Gastrocnemius medialis (tissue), 4 donors: ENCODE measurements at regions of chr2 and their contacts with region 1.

Region 1: DNA sequence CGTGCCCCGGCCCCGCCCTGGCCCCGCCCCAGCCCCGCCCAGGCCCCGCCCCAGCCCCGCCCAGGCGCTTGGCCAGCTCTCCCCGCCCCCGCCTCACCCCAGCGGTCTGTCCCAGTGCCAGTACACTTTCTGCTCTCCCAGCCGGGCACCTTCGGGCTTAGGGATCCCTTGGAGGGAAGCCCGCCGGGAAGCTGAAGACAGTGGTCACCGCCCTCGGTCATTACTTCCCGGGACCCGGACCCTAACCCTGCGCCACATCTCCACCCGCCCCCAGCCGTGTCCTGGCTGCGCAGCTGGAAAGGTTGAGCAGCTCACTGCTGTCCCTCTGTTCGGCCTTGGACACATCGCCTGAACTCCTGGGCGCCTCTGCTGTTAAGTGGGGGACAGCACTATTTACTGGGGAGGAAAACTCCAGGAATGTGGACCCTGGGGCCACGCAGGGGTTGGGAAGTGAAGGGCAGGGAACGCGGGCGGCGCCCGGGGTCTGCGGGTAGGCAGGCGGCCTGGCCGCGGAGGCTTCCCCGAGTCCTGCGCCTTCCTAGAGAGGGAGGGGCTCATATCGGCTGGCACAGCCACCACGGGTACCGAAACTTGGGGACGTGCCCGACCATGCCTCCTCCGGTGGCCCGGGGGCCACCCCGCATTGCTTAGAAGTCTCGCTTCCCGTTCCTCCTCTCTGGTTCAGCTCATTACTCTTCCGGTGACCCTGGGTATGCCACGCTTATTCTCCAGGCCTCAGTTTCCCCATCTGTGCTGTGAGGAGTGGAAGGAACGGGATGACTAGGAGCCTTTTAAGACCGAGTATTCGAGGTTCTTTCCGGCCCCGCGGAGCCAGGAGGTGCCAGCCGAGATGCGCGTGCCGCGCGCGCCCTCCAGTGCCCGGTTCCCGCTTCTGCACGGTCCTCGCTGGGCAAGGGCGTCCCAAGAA is 121.0 kb downstream of the GYPC start:
- DNase-seq: peak; percentile 59 to 69
- ATAC-seq: peak; percentile 89 to 91
- H3K4me3 ChIP-seq: peak overlapping the region; percentile 67 to 74 (median 70)
- H3K27ac ChIP-seq: peak overlapping the region; percentile 50 to 74 (median 59)
- H3K4me1 ChIP-seq: peaks cover 0 to 5% of the 10 kb centered on the region in 2 donors
- H3K27me3 ChIP-seq: no peaks in the 10 kb centered on the region
- CTCF ChIP-seq: peak; percentile 88 to 99 (median 94)
- POLR2A ChIP-seq: no peak

Region 2: GRCh38 chr2:126244937-126245336 is 532.0 kb before region 1 on chr2:
- in situ Hi-C with region 1: loop called in 1 of 4 experiments (anchors 25 kb)
- intact Hi-C with region 1: loop called (anchors 5 kb)
- DNase-seq: peak in 1 of 2 donors; percentile 16
- ATAC-seq: no peak
- H3K4me3 ChIP-seq: no peak overlapping the region
- H3K27ac ChIP-seq: no peak overlapping the region
- H3K4me1 ChIP-seq: no peaks in the 10 kb centered on the region
- H3K27me3 ChIP-seq: no peaks in the 10 kb centered on the region
- CTCF ChIP-seq: peak in 1 of 5 experiments; percentile 34
- POLR2A ChIP-seq: no peak

Region 3: DNA sequence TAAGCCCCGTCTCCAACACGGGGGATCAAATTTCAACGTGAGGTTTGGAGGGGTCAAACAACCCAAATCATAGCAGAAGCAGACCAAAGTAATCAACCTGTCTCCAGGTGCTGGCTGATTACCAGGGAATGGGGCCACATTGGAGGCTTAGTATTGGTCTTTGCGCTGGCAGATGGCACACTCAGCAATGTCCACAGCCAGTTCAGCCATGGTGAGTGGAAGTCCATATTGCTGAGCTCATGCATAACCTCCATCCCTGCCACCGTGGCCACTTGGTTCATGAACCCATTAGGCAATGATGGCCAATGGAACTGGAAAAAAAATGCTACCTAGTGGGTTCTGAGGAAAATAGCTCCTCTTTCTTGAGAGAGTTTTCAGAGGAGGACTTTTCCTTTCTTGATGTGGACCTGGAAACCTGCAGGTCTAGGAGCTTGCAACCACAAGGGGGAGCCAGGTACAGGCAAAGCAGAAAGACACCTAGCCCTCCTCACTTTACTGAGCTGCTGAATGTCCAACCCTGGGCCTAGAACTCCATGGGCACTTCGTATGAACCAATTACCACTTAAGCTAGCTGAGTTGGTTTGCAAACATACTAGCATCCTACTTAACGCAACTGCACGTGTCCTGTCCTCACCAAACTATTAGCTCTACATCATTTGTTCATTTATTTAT is 249.0 kb before region 1 on chr2:
- in situ Hi-C with region 1: loop called (anchors 5 to 10 kb)
- intact Hi-C with region 1: loop called (anchors 1 kb)
- DNase-seq: peak; percentile 37 to 58
- ATAC-seq: peak; percentile 81 to 83
- H3K4me3 ChIP-seq: no peak overlapping the region
- H3K27ac ChIP-seq: no peak overlapping the region
- H3K4me1 ChIP-seq: no peaks in the 10 kb centered on the region
- H3K27me3 ChIP-seq: no peaks in the 10 kb centered on the region
- CTCF ChIP-seq: peak; percentile 49 to 77 (median 66)
- POLR2A ChIP-seq: no peak

Region 4: GRCh38 chr2:126634273-126634861 is 142.6 kb before region 1 on chr2:
- in situ Hi-C with region 1: loop called in 1 of 4 experiments (anchors 10 kb)
- intact Hi-C with region 1: no loop called
- DNase-seq: no peak
- ATAC-seq: no peak
- H3K4me3 ChIP-seq: no peak overlapping the region
- H3K27ac ChIP-seq: no peak overlapping the region
- H3K4me1 ChIP-seq: peaks cover 0 to 13% of the 10 kb centered on the region in 2 donors
- H3K27me3 ChIP-seq: no peaks in the 10 kb centered on the region
- CTCF ChIP-seq: peak in 3 of 5 experiments; percentile 15 to 41 (median 33)
- POLR2A ChIP-seq: no peak

Region 5: DNA sequence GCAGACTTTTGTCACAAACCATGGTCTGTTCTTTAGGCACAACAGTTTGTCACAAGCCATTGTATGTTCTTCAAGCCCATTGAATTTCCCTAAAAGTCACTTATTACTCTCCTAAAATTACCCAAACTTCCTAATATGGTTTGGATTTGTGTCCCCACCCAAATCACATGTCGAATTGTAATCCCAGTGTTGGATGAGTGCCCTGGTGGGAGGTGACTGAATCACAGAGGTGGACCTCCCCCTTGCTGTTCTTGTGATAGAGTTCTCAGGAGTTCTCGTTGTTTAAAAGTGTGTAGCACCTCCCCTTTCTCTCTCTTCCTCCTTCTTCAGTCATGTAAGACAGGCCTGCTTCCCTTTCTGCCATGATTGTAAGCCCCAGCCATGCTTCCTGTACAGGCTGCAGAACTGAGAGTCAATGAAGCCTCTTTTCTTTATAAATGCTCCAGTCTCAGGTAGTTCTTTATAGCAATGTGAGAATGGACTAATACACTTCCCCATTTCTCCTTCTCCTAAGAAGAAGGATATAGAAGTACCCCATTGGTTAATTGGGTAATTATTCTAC is 132.2 kb before region 1 on chr2:
- in situ Hi-C with region 1: loop called in 1 of 4 experiments (anchors 10 kb)
- intact Hi-C with region 1: loop called (anchors 2 kb)
- DNase-seq: no peak
- ATAC-seq: no peak
- H3K4me3 ChIP-seq: no peak overlapping the region
- H3K27ac ChIP-seq: no peak overlapping the region
- H3K4me1 ChIP-seq: peaks cover 6 to 7% of the 10 kb centered on the region in 2 donors
- H3K27me3 ChIP-seq: no peaks in the 10 kb centered on the region
- CTCF ChIP-seq: no peak
- POLR2A ChIP-seq: no peak